Heart left ventricle (tissue), 16 donors: ENCODE measurements at regions of chr11 and their contacts with region 1.

Region 1: GRCh38 chr11:13486926-13487660 is 8.7 kb downstream of the PTH start:
- DNase-seq: peak; percentile 32 to 81 (median 46)
- ATAC-seq: peak in 3 of 4 donors; percentile 59 to 91 (median 89)
- H3K4me3 ChIP-seq: peak overlapping the region in 7 of 12 donors; percentile 25 to 45 (median 35)
- H3K27ac ChIP-seq: peak overlapping the region in 1 of 12 donors; percentile 27
- H3K4me1 ChIP-seq: no peaks in the 10 kb centered on the region
- H3K27me3 ChIP-seq: peaks cover 0 to 6% (median 0%) of the 10 kb centered on the region in 9 donors
- CTCF ChIP-seq: peak in 11 of 12 donors; percentile 6 to 61 (median 35)
- POLR2A ChIP-seq: no peak

Region 2: GRCh38 chr11:13440100-13440855 is 46.8 kb before region 1 on chr11:
- intact Hi-C with region 1: no loop called
- DNase-seq: peak in 2 of 5 donors; percentile 22 to 27
- ATAC-seq: peak; percentile 86 to 99 (median 98)
- H3K4me3 ChIP-seq: peak overlapping the region in 10 of 12 donors; percentile 21 to 50 (median 32)
- H3K27ac ChIP-seq: peak overlapping the region in 9 of 12 donors; percentile 3 to 55 (median 41)
- H3K4me1 ChIP-seq: peaks cover 0 to 20% (median 7%) of the 10 kb centered on the region in 12 donors
- H3K27me3 ChIP-seq: no peaks in the 10 kb centered on the region
- CTCF ChIP-seq: no peak
- POLR2A ChIP-seq: no peak

Region 3: GRCh38 chr11:13535819-13536218 is 48.7 kb after region 1 on chr11:
- intact Hi-C with region 1: no loop called
- DNase-seq: no peak
- ATAC-seq: no peak
- H3K4me3 ChIP-seq: no peak overlapping the region
- H3K27ac ChIP-seq: no peak overlapping the region
- H3K4me1 ChIP-seq: no peaks in the 10 kb centered on the region
- H3K27me3 ChIP-seq: peaks cover 0 to 6% (median 0%) of the 10 kb centered on the region in 9 donors
- CTCF ChIP-seq: no peak
- POLR2A ChIP-seq: no peak

Region 4: DNA sequence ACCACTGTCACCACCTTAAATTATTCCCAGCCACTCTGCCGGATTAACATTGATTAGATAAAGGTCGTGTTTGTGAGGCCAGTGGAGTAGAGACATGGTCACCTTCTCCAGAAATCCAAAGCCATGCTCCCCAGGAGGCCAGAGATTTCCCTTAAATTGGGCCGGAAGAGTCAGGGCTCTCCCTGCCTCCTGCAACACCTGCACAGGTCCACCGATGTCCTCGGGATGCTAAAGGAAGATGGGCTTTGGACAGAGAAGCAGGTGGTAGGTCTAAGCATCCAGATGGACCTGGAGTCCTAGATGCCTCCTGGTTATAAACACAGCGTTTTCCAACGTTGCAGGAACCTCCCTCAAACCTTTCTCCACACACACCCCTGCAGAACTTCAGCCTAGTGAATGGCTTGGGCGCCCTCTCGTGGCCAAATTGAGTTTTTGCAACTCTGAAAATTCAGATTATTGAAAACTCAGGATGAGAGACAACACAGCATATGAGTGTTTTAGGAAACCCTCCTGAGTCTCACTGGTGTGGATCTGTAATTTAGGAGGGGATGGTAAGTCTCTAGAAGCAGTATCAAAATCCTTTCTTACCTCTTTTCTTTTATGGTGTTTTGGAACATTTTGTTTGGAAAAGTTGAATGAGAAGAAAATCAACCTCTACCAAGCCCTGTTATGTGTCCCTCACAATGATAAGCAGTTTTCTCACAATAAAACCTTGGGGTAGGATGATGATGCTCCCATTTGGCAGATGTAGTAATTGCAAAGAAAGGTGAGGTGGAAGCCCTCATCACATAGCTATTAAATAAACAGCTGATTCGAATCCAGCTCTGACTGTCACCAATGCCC is 762.2 kb after region 1 on chr11:
- intact Hi-C with region 1: loop called in 1 of 10 experiments (anchors 10 kb)
- DNase-seq: peak in 4 of 5 donors; percentile 37 to 75 (median 53)
- ATAC-seq: peak in 3 of 4 donors; percentile 49 to 64 (median 51)
- H3K4me3 ChIP-seq: no peak overlapping the region
- H3K27ac ChIP-seq: no peak overlapping the region
- H3K4me1 ChIP-seq: peaks cover 0 to 20% (median 2%) of the 10 kb centered on the region in 12 donors
- H3K27me3 ChIP-seq: peaks cover 0 to 43% (median 2%) of the 10 kb centered on the region in 9 donors
- CTCF ChIP-seq: peak; percentile 80 to 93 (median 90)
- POLR2A ChIP-seq: no peak